ENCODE measurements at regions of chr2 and their contacts with region 1.

Region 1: DNA sequence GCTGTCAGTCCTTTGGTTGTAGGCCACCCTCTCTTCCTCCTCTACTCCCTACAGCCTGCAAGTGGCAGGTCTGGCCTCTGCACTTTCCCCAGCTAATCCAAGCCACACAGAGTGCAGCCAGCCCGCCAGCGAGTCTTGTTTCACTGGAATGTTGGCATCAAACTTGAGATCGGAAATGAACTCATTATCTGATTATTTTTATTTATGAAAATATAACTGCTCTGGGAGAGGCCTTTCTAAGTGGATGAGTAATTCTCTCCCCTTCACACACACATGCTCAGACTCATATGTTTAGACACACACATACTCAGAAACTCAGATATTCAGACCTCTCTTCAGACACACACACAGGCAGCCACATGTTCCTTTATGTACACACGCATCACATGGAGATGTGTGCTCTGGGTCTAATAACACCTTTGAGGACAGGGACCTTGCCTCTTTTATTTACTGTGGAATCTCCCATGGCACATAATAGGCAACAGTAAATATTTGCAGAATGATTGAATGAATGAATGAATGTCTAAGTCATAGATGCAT is 151.3 kb downstream of the ZFP36L2 start:
- DNase-seq: peak; percentile 94
- H3K4me3 ChIP-seq: no peak overlapping the region
- CTCF ChIP-seq: no peak

Region 2: DNA sequence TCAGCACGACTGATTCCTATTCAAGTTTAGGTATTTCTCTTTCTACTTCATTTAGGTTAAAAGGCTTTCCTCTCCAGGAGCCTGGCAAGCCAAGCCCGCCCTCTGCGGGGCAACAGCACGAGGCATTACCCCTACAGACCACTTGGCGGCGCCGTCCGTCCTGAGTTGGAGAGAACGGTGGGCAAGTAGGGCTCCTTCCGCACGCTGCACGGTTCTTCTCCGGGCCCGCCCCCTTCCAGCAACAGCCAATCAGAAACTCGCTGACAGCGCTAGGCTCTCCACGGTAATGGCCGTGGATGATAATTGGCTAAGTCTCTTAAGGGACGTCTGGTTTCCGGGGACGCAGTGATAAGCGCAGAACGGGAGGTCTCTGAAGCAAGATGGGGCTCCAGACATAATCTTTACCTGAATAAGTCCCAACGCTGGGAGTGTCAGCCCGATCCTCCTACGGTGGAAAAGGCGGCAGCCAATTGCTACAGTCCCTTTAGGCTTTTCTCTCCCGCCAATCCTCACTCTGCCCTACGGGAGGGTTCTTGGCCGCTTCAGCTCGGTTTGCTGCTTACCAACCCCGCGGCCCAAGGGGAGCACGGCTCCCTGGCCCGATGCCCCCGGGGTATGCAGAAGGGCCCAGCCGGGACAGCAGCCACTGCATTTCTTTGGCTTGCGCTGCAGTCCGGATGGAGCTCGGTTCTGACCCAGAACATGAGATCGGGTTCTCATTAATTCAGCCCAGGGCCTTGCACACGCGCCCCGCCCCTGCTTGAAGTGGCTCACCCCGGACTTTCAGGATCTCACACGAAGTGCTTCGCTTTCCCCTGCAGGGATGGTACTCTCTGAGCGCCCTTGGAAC is 1234.2 kb before region 1 on chr2:
- in situ Hi-C with region 1: no loop called
- DNase-seq: peak; percentile 91
- H3K4me3 ChIP-seq: peak overlapping the region; percentile 57
- CTCF ChIP-seq: peak; percentile 99

Region 3: DNA sequence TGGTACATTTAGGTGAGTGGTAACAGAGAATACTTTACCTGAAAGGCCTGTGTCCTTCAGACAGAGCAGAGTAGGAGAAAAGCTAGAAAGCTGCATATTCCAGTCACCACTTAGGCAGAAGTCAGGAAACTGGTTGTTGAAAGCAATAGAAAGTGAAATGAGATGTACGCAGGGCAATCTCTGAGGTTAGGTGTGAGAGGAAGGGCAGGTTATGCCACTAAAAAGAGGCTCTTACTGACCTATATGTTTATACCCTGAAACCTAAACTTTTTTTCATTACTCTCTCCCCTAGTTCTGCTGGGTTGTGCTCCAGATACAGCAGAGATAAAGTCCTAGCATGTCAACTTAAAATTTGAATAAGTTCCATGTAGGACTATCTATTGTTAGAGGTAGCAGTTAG is 807.6 kb before region 1 on chr2:
- in situ Hi-C with region 1: no loop called
- DNase-seq: no peak
- H3K4me3 ChIP-seq: no peak overlapping the region
- CTCF ChIP-seq: no peak

Region 4: DNA sequence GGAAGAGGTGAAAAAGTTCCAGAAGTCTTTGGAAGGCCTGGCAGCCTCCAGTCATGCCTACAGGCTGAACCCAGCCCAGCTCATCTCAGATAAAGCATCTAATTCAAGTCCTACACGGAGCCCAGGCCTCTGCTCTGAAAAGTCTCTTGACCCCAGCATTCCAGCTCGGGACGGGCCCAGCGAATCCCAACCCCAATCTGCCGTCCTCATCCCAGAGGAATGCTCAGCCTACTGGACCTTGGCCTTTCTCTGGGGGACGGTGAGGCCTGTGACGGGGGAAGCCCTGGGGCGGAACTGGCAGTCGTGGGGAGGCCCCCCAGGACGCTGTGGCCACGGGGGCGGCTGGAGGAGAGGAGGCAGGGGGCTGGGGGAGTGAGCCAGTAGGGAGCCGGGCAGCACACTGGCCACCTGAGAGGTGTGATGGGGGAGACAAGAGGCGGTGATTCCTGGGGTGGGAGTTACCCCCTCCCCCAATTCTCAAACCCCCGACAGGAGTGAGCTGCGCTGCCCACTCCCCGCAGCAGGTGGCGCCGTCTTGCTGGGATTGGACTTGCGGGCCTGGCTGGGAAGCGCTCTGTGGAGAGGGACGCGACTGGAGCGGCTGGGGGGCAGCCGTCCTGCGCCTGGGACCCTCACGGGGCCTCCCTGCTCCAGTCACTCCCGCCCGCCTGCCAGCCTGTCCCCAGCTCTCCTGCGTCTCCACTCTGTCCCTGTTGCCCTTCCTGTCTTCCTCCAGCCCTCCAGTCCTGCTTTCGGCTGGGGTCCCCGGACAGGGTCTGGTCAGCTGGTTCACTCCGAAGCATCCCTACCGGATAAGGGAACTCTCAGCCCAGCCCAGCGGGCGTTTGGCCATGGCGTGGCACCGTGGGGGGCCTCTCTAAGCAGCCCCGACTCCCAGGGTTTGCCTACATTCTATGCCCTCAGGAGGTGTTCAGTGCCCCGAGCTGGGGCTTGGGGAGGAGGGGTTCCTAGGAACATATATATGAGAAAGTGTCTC is 100.1 kb before region 1 on chr2:
- in situ Hi-C with region 1: loop called (anchors 5 kb)
- DNase-seq: no peak
- H3K4me3 ChIP-seq: peak overlapping the region; percentile 21
- CTCF ChIP-seq: peak; percentile 82

Region 5: GRCh38 chr2:43018179-43019024 is 56.7 kb before region 1 on chr2:
- in situ Hi-C with region 1: no loop called
- DNase-seq: no peak
- H3K4me3 ChIP-seq: no peak overlapping the region
- CTCF ChIP-seq: no peak

Region 6: GRCh38 chr2:43041661-43042360 is 33.3 kb before region 1 on chr2:
- in situ Hi-C with region 1: loop called (anchors 5 kb)
- DNase-seq: peak; percentile 99
- H3K4me3 ChIP-seq: no peak overlapping the region
- CTCF ChIP-seq: no peak

Measured in astrocyte of the cerebellum (primary cell).